Activated CD4-positive, alpha-beta T cell treated with anti-CD3 and anti-CD28 coated beads for 36 hours (primary cell): ENCODE measurements at regions of chr2 and their contacts with region 1.

Region 1: DNA sequence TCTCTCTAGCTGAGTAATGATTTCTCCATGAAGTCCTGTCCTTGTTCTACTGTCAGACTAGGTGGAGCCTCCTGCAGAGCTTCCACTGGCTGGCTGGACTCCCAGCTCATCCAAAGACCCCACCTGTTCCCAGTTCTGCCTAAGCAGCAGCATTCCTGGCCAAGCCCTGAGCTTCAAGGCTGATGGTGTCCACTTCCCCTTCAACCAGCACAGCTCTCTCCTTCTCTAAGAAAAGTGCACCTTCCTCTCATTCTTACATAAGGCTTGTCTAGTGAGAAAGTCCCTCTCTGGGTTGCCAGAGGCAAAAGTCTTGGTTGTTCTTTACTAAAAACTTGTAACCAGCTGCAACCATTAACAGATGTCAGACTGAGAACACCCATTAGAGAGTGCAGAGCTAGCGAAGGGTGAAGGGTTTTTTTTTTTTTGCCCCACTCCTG is 58.9 kb downstream of the CXCR4 start:
- DNase-seq: no peak
- ATAC-seq: no peak
- H3K4me3 Mint-ChIP-seq: no peak overlapping the region
- H3K27ac Mint-ChIP-seq: no peak overlapping the region
- H3K4me1 Mint-ChIP-seq: peaks cover 49% of the 10 kb centered on the region
- H3K27me3 Mint-ChIP-seq: no peaks in the 10 kb centered on the region

Region 2: GRCh38 chr2:135913727-135914365 is 145.2 kb before region 1 on chr2:
- CTCF ChIA-PET with region 1: interaction called, 4 read pairs
- POLR2A ChIA-PET with region 1: no interaction called
- intact Hi-C with region 1: loop called in 1 of 2 experiments (anchors 5 kb)
- DNase-seq: peak; percentile 53
- ATAC-seq: peak; percentile 58
- H3K4me3 Mint-ChIP-seq: no peak overlapping the region
- H3K27ac Mint-ChIP-seq: no peak overlapping the region
- H3K4me1 Mint-ChIP-seq: peaks cover 7% of the 10 kb centered on the region
- H3K27me3 Mint-ChIP-seq: no peaks in the 10 kb centered on the region

Region 3: GRCh38 chr2:136008205-136008865 is 50.7 kb before region 1 on chr2:
- CTCF ChIA-PET with region 1: no interaction called
- POLR2A ChIA-PET with region 1: no interaction called
- intact Hi-C with region 1: loop called (anchors 2 to 5 kb)
- DNase-seq: peak; percentile 74
- ATAC-seq: peak; percentile 91
- H3K4me3 Mint-ChIP-seq: no peak overlapping the region
- H3K27ac Mint-ChIP-seq: peak overlapping the region; percentile 47
- H3K4me1 Mint-ChIP-seq: peaks cover 31% of the 10 kb centered on the region
- H3K27me3 Mint-ChIP-seq: no peaks in the 10 kb centered on the region

Region 4: GRCh38 chr2:136305517-136306192 is 246.6 kb after region 1 on chr2:
- CTCF ChIA-PET with region 1: no interaction called
- POLR2A ChIA-PET with region 1: interaction called, 4 read pairs
- intact Hi-C with region 1: loop called in 1 of 2 experiments (anchors 5 kb)
- DNase-seq: peak; percentile 84
- ATAC-seq: peak; percentile 99
- H3K4me3 Mint-ChIP-seq: no peak overlapping the region
- H3K27ac Mint-ChIP-seq: peak overlapping the region; percentile 88
- H3K4me1 Mint-ChIP-seq: peaks cover 33% of the 10 kb centered on the region
- H3K27me3 Mint-ChIP-seq: peaks cover 5% of the 10 kb centered on the region

Region 5: GRCh38 chr2:136362676-136363390 is 303.8 kb after region 1 on chr2:
- CTCF ChIA-PET with region 1: no interaction called
- POLR2A ChIA-PET with region 1: no interaction called
- intact Hi-C with region 1: loop called in 1 of 2 experiments (anchors 1 kb)
- DNase-seq: peak; percentile 65
- ATAC-seq: peak; percentile 82
- H3K4me3 Mint-ChIP-seq: no peak overlapping the region
- H3K27ac Mint-ChIP-seq: peak overlapping the region; percentile 63
- H3K4me1 Mint-ChIP-seq: peaks cover 54% of the 10 kb centered on the region
- H3K27me3 Mint-ChIP-seq: peaks cover 12% of the 10 kb centered on the region

Region 6: DNA sequence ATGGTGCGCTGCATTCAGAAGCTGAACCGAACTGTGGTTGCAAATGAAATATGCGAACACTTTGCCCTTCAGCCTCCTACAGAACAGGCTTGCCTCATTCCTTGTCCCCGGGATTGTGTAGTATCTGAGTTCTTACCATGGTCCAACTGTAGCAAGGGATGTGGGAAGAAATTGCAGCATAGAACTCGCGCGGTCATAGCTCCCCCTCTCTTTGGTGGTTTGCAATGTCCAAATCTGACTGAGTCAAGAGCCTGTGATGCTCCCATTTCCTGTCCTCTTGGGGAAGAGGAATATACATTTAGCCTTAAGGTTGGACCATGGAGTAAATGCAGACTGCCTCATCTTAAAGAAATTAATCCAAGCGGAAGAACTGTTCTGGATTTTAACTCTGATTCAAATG is 997.6 kb after region 1 on chr2:
- CTCF ChIA-PET with region 1: no interaction called
- POLR2A ChIA-PET with region 1: no interaction called
- intact Hi-C with region 1: no loop called
- DNase-seq: no peak
- ATAC-seq: no peak
- H3K4me3 Mint-ChIP-seq: no peak overlapping the region
- H3K27ac Mint-ChIP-seq: no peak overlapping the region
- H3K4me1 Mint-ChIP-seq: no peaks in the 10 kb centered on the region
- H3K27me3 Mint-ChIP-seq: no peaks in the 10 kb centered on the region